Heart left ventricle (tissue), 16 donors: ENCODE measurements at regions of chr2 and their contacts with region 1.

Region 1: DNA sequence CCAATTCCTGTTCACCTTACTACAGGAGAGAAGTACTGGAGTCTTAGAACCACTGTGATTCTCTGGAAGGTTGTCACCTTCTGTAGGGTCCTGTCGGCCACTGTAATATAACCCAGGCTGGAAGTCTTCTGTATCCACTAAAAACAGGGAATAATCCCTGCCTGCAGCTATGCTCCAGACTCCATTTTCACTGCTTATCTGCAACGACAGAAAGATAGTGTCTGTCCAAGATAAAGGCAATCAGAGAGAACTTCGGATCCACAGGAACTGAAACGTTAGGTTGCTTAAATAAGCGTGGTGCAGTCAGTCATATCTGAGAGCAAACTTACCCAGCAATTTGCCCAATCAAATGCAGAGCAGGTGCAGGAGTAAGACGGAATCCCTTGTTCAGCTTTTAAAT is 34.2 kb downstream of the ALS2 start:
- DNase-seq: no peak
- ATAC-seq: no peak
- H3K4me3 ChIP-seq: no peak overlapping the region
- H3K27ac ChIP-seq: no peak overlapping the region
- H3K4me1 ChIP-seq: no peaks in the 10 kb centered on the region
- H3K27me3 ChIP-seq: no peaks in the 10 kb centered on the region
- CTCF ChIP-seq: no peak
- POLR2A ChIP-seq: no peak

Region 2: GRCh38 chr2:201709747-201710146 is 36.8 kb before region 1 on chr2:
- intact Hi-C with region 1: loop called in 1 of 10 experiments (anchors 5 kb)
- DNase-seq: no peak
- ATAC-seq: no peak
- H3K4me3 ChIP-seq: no peak overlapping the region
- H3K27ac ChIP-seq: no peak overlapping the region
- H3K4me1 ChIP-seq: no peaks in the 10 kb centered on the region
- H3K27me3 ChIP-seq: no peaks in the 10 kb centered on the region
- CTCF ChIP-seq: no peak
- POLR2A ChIP-seq: no peak

Region 3: GRCh38 chr2:202072737-202073401 is 326.3 kb after region 1 on chr2 and contains the start of gene KIAA2012:
- intact Hi-C with region 1: no loop called
- DNase-seq: no peak
- ATAC-seq: no peak
- H3K4me3 ChIP-seq: no peak within 1 kb of the TSS
- H3K27ac ChIP-seq: no peak within 1 kb of the TSS
- H3K4me1 ChIP-seq: no peaks in the 10 kb centered on the region
- H3K27me3 ChIP-seq: no peaks in the 10 kb centered on the region
- CTCF ChIP-seq: no peak
- POLR2A ChIP-seq: no peak
- total RNA-seq, gene KIAA2012: 0.08 TPM in 1 of 9 donors, not detected in the others